SK-N-SH (cell line): ENCODE measurements at regions of chr6 and their contacts with region 1.

Region 1: GRCh38 chr6:7723041-7723447 is 2.9 kb upstream of the BMP6 start:
- DNase-seq: peak; percentile 50
- H3K4me3 ChIP-seq: peak overlapping the region in 1 of 2 experiments; percentile 4; a peak in 1 of 4 replicates
- H3K27ac ChIP-seq: no peak overlapping the region
- H3K4me1 ChIP-seq: peaks cover 3 to 7% of the 10 kb centered on the region in 2 experiments; a peak in 1 of 4 replicates
- H3K27me3 ChIP-seq: peaks cover 39% of the 10 kb centered on the region
- CTCF ChIP-seq: peak; percentile 69
- EP300 ChIP-seq: no peak
- RAD21 ChIP-seq: peak; percentile 51

Region 2: DNA sequence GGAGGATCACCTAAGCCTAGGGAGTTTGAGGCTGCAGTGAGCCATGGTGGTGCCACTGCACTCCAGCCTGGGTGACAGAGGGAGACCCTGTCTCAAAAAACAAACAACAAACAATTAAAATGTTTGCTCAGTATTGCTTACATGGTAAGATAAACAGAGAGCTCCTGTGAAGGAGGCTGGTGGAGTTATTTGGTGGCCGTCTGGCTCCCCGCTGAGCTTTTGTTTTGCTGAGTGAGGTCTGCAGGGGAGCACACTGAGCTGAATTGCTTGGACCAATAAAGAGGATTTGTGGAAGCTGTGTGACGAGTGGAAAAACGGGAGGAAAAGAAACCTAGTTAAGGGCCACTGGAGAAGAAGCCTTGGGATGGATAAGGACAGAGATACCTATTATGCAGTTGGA is 38.2 kb before region 1 on chr6:
- CTCF ChIA-PET with region 1: no interaction called
- POLR2A ChIA-PET with region 1: no interaction called
- DNase-seq: no peak
- H3K4me3 ChIP-seq: no peak overlapping the region
- H3K27ac ChIP-seq: no peak overlapping the region
- H3K4me1 ChIP-seq: no peaks in the 10 kb centered on the region
- H3K27me3 ChIP-seq: peaks cover 88% of the 10 kb centered on the region
- CTCF ChIP-seq: no peak
- EP300 ChIP-seq: no peak
- RAD21 ChIP-seq: no peak

Region 3: DNA sequence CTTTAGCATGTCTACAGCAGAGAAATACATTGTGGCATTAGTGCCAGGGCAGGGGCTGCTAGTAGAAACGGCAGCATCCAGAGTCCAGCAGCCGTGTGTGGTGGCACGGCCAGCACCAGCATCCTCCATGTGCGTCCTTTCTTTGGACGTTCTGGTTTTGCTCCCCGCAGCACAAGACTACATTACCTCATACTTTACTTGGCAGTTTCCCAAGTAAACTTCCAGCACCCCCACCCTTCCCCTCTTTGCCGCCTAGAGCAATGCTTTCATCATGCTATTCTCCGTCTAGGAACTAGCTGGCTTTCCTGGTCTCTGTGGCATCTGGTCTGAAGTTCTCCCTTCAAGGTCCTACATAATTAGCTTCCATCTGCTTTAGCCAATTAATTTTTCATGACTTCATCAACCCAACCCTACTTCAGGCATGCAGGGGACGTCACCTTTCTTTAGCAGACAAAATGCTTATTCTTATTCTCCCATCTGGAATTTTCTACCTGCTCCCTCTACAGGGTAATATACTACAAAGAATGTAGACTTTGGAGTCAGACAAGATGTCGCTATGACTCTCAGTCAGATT is 273.6 kb after region 1 on chr6:
- CTCF ChIA-PET with region 1: interaction called, 10 read pairs
- POLR2A ChIA-PET with region 1: no interaction called
- DNase-seq: peak; percentile 57
- H3K4me3 ChIP-seq: no peak overlapping the region
- H3K27ac ChIP-seq: no peak overlapping the region
- H3K4me1 ChIP-seq: peaks cover 6 to 10% of the 10 kb centered on the region in 2 experiments; a peak in 2 of 4 replicates
- H3K27me3 ChIP-seq: no peaks in the 10 kb centered on the region
- CTCF ChIP-seq: no peak
- EP300 ChIP-seq: no peak
- RAD21 ChIP-seq: no peak

Region 4: DNA sequence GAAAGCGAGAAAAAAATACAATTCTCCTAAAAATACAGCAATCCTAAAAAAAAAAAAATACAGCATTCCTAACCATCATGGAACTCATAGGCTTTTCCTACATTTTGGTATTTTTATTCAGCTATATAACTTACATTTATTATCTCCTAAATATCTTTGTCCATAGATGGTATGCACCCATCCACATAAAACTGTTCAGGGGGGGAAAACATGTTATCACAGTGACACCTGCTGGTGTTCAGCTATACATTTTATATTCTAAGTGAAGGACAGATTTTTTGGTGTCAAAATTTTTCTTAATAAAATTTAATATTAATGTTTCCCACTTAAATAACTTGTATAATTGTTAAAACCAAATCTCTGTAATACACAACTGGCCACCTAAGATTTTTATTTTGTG is 283.2 kb after region 1 on chr6:
- CTCF ChIA-PET with region 1: interaction called, 18 read pairs
- POLR2A ChIA-PET with region 1: no interaction called
- DNase-seq: peak; percentile 57
- H3K4me3 ChIP-seq: no peak overlapping the region
- H3K27ac ChIP-seq: no peak overlapping the region
- H3K4me1 ChIP-seq: no peaks in the 10 kb centered on the region; a peak in 1 of 4 replicates
- H3K27me3 ChIP-seq: no peaks in the 10 kb centered on the region
- CTCF ChIP-seq: peak; percentile 75
- EP300 ChIP-seq: no peak
- RAD21 ChIP-seq: peak; percentile 80

Region 5: DNA sequence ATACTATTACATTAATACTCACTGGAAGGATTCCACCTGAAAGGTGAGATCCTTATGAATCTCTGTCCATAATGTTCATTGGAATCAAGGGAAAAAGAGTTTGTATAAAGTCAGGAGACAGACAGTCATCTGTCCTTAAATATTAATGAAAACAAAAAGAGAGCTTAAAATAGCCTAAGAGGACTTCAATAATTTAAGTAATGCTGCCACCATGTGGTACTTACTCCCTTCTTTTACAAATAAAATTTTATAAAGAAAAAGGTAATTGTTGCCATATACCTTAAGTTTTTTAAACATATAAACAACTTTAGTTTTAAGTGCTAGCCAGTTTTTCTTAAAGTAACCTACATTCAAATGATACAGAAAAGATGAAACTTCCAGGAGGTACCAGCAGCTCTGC is 336.1 kb after region 1 on chr6:
- CTCF ChIA-PET with region 1: interaction called, 17 read pairs
- POLR2A ChIA-PET with region 1: no interaction called
- DNase-seq: peak; percentile 12
- H3K4me3 ChIP-seq: no peak overlapping the region
- H3K27ac ChIP-seq: no peak overlapping the region
- H3K4me1 ChIP-seq: no peaks in the 10 kb centered on the region; a peak in 2 of 4 replicates
- H3K27me3 ChIP-seq: no peaks in the 10 kb centered on the region
- CTCF ChIP-seq: peak; percentile 67
- EP300 ChIP-seq: no peak
- RAD21 ChIP-seq: peak; percentile 55